Activated CD8-positive, alpha-beta T cell treated with anti-CD3 and anti-CD28 coated beads for 36 hours (primary cell): ENCODE measurements at regions of chr2 and their contacts with region 1.

Region 1: DNA sequence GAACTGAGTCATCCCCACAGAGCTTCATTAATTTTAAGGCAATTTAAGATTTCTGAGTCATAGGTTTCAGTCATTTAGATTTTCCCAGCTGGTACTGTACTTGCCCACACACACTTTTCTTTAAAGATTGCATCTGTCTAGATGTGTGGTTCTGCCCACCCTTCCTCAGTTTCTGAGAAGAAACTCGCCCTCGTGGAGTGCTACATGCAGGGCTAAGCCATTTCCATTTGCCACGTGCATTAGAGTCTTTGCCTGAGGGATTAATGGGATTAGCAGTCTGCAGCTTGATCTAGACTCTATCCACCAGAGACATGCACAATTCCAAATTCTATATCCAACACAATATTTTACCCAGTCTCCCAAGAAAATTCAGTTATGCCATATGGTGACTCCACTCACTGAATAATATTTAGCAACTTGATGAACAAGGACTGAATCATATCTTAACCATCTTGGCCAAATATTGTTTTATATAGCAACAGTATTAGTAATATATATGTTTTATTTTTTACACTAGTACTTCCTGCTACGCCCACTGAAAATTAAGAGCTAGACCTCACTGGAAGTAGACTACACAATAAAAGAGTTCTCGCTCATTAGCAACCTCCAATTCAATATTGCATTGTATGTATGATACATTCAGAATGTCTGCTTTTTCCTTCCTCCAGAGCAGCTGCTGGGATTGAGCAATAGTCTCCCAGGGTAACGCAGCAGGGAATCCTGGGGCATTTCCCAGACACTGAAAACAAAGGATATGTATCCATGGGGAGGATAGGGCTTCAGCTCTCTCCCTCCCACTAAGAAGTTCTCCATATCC is 14.2 kb upstream of the TRIB2 start:
- DNase-seq: peak; percentile 39
- ATAC-seq: peak; percentile 86
- H3K4me3 Mint-ChIP-seq: no peak overlapping the region
- H3K27ac Mint-ChIP-seq: no peak overlapping the region
- H3K4me1 Mint-ChIP-seq: peaks cover 36% of the 10 kb centered on the region
- H3K27me3 Mint-ChIP-seq: no peaks in the 10 kb centered on the region
- CTCF ChIP-seq: no peak

Region 2: GRCh38 chr2:12555012-12555645 is 147.4 kb before region 1 on chr2:
- CTCF ChIA-PET with region 1: no interaction called
- POLR2A ChIA-PET with region 1: no interaction called
- intact Hi-C with region 1: loop called (anchors 2 kb)
- DNase-seq: peak; percentile 59
- ATAC-seq: peak; percentile 89
- H3K4me3 Mint-ChIP-seq: peak overlapping the region; percentile 4
- H3K27ac Mint-ChIP-seq: peak overlapping the region; percentile 77
- H3K4me1 Mint-ChIP-seq: peaks cover 34% of the 10 kb centered on the region
- H3K27me3 Mint-ChIP-seq: no peaks in the 10 kb centered on the region
- CTCF ChIP-seq: no peak

Region 3: DNA sequence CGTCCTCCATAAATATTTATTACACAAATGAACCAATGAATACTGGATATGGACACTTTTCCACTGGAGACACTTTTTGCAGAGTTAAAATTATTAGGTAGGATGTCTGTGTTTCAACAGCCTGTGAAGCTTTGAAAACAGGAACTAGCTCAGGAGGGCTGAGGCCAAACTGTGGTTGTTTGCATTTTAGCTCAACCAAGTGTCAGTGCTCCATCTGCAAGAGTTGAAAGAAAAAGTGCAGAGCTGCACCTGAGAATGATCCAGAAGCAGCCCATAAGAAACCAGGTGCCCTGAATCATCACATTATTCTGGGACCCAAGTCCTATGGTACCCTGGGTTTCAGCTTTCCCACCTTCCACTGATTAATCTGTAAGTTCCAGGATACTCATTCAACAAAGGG is 194.7 kb after region 1 on chr2:
- CTCF ChIA-PET with region 1: no interaction called
- POLR2A ChIA-PET with region 1: no interaction called
- intact Hi-C with region 1: no loop called
- DNase-seq: no peak
- ATAC-seq: no peak
- H3K4me3 Mint-ChIP-seq: no peak overlapping the region
- H3K27ac Mint-ChIP-seq: no peak overlapping the region
- H3K4me1 Mint-ChIP-seq: peaks cover 19% of the 10 kb centered on the region
- H3K27me3 Mint-ChIP-seq: no peaks in the 10 kb centered on the region
- CTCF ChIP-seq: no peak

Region 4: DNA sequence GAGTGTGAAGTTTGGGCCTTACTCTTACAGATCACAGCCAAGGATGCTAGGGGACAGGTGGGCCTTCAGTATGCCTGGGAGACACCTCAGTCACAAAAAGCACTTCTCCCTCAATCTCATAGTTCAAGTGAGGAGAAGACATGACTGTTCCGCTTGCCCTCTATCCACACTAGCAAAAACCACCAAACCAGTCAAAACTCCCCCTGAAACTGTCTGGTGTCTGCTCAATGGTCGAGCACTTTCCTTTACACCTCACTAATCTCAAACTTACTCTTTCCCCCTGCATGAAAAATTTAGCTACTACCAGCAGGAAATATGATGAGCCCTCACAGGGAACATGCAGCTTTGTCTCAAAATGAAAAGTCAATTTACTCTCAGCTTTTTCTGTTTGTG is 246.4 kb after region 1 on chr2:
- CTCF ChIA-PET with region 1: no interaction called
- POLR2A ChIA-PET with region 1: no interaction called
- intact Hi-C with region 1: no loop called
- DNase-seq: peak; percentile 33
- ATAC-seq: peak; percentile 81
- H3K4me3 Mint-ChIP-seq: no peak overlapping the region
- H3K27ac Mint-ChIP-seq: no peak overlapping the region
- H3K4me1 Mint-ChIP-seq: peaks cover 6% of the 10 kb centered on the region
- H3K27me3 Mint-ChIP-seq: peaks cover 27% of the 10 kb centered on the region
- CTCF ChIP-seq: no peak